Gastrocnemius medialis (tissue), 4 donors: ENCODE measurements at regions of chr3 and their contacts with region 1.

Region 1: DNA sequence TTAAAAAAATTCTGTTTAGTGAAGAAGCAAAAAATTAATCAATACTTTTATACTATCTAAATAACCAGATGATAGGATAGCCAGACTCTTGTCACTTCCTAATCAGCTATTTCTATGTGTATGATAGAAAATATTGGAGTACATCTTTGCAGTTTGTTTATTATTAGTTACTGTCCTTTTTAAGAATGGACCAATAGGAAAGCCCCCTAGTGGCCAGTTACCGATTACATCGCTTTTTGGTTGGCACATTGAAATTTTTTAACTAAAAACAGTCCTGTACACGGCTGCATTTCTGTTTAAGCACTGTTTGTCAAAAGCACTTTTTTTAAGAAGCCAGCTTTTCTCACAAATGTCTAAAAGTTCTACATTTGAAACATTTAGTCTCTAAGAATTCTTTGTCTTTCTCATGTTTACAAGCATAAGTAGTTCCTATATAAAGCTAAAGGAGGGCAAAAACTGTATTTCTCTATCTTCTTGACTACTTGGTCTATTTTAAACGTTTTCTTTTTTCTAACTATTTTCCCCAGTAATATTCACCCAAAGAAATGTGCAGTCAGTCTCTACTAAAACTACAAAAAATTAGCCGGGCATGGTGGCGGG is 253.2 kb upstream of the LRTM1 start:
- DNase-seq: no peak
- ATAC-seq: no peak
- H3K4me3 ChIP-seq: no peak overlapping the region
- H3K27ac ChIP-seq: no peak overlapping the region
- H3K4me1 ChIP-seq: no peaks in the 10 kb centered on the region
- H3K27me3 ChIP-seq: no peaks in the 10 kb centered on the region
- CTCF ChIP-seq: peak; percentile 41 to 77 (median 58)
- POLR2A ChIP-seq: no peak

Region 2: GRCh38 chr3:54870423-54870822 is 310.6 kb before region 1 on chr3:
- in situ Hi-C with region 1: loop called in 2 of 4 experiments (anchors 10 to 25 kb)
- intact Hi-C with region 1: loop called (anchors 1 kb)
- DNase-seq: no peak
- ATAC-seq: peak; percentile 84 to 86
- H3K4me3 ChIP-seq: no peak overlapping the region
- H3K27ac ChIP-seq: no peak overlapping the region
- H3K4me1 ChIP-seq: peaks cover 0 to 3% of the 10 kb centered on the region in 2 donors
- H3K27me3 ChIP-seq: no peaks in the 10 kb centered on the region
- CTCF ChIP-seq: peak; percentile 31 to 59 (median 45)
- POLR2A ChIP-seq: no peak